ENCODE measurements at regions of chr9 and their contacts with region 1.

Region 1: GRCh38 chr9:34252670-34253459 is 74.0 kb downstream of the UBAP1 start:
- DNase-seq: peak; percentile 64
- H3K4me3 Mint-ChIP-seq: no peak overlapping the region
- H3K27ac Mint-ChIP-seq: peak overlapping the region; percentile 94
- H3K4me1 Mint-ChIP-seq: peaks cover 32% of the 10 kb centered on the region
- H3K27me3 Mint-ChIP-seq: no peaks in the 10 kb centered on the region
- CTCF ChIP-seq: peak; percentile 72

Region 2: DNA sequence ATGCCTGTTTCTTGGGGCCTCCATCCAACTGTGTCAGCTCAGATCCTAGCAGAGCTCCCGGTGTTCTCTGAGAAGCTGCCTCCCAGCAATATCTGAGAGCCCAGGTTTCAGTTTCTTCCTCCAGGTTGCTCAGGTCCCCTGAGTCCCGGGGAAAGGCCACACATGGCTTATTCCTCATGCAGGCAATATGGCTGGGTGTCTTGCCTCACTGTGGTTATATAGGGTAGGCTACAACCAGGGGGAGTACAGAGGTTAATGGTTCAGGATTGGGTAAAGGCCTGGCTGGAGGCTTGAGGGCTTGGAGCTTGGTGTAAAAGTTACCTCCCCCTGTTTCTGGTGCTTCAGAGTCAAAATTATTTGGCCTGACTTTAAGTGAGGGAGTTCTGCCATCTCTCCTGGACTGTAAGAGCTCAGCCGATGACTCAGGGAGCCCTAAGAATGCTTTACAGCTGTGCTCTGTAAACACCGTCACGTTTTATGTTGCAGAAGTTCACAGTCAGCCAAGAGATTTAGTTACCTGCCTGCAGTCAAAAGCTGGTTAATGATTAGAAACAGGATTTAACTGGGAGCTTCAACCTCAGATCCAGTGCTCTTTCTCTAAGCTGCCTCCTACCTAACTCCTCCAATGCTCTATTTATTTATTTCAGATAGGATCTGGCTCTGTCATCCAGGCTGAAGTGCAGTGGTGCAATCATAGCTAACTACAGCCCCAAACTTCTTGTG is 179.8 kb before region 1 on chr9:
- CTCF ChIA-PET with region 1: interaction called, 39 read pairs
- POLR2A ChIA-PET with region 1: interaction called, 3 read pairs
- intact Hi-C with region 1: loop called (anchors 1 kb)
- DNase-seq: peak; percentile 80
- H3K4me3 Mint-ChIP-seq: no peak overlapping the region
- H3K27ac Mint-ChIP-seq: peak overlapping the region; percentile 81
- H3K4me1 Mint-ChIP-seq: peaks cover 22% of the 10 kb centered on the region
- H3K27me3 Mint-ChIP-seq: no peaks in the 10 kb centered on the region
- CTCF ChIP-seq: no peak

Region 3: DNA sequence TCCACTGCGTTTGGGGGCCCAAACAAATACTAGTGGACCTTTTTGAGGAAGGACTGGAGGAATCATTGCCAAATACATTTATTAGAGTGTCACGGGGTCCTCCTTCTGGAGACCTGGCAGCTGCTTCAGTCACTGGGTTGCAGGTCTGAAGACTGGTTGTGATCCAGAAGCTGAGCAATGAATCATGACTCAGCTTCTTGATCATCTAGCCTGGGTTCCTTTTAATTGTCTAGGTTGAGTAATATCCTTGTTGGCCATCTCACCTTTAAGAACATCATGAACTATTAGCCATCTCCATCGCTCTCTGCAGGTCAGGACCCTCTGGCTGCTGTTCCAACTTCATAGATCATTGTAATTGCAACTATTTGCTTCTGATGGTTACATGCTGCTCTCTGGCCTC is 89.4 kb before region 1 on chr9:
- CTCF ChIA-PET with region 1: interaction called, 6 read pairs
- POLR2A ChIA-PET with region 1: interaction called, 17 read pairs
- intact Hi-C with region 1: no loop called
- DNase-seq: peak; percentile 93
- H3K4me3 Mint-ChIP-seq: peak overlapping the region; percentile 41
- H3K27ac Mint-ChIP-seq: peak overlapping the region; percentile 36
- H3K4me1 Mint-ChIP-seq: peaks cover 23% of the 10 kb centered on the region
- H3K27me3 Mint-ChIP-seq: no peaks in the 10 kb centered on the region
- CTCF ChIP-seq: no peak

Region 4: DNA sequence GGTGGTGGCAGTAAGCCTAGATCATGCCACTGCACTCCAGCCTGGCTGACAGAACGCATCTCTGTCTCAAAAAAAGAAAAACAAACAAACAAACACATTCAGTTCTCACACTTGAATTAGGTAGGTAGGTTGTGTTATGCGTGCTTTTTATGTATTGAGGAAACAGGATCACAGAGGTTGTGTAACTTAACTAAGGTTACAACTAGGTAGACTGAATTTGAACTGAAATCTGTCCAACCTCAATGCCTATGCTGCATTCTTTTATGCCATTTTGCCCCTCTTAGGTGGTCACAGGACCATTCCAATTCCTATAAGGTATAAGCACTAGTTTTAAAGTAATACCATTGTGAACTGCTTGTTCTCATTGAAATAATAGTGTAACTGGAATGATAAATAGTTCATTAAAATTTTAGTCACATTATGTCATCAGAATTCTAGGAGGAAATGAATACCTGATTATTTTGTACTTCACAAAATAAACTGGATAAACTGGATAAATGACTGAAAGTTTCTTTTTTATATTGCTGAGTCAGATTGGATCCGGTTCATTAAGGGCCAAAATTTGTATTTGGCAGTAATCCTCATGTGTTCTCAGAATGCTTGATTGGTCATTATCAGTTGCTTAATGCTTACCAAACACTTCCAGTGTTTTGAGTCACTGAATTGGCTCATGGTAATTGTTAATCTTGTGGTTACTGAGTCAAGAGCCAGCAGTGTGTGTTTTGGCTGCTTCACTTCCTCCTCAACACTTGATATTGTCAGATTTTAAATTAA is 66.9 kb before region 1 on chr9:
- CTCF ChIA-PET with region 1: interaction called, 26 read pairs
- POLR2A ChIA-PET with region 1: interaction called, 86 read pairs
- intact Hi-C with region 1: loop called (anchors 1 kb)
- DNase-seq: peak; percentile 96
- H3K4me3 Mint-ChIP-seq: peak overlapping the region; percentile 8
- H3K27ac Mint-ChIP-seq: peak overlapping the region; percentile 67
- H3K4me1 Mint-ChIP-seq: peaks cover 23% of the 10 kb centered on the region
- H3K27me3 Mint-ChIP-seq: no peaks in the 10 kb centered on the region
- CTCF ChIP-seq: no peak

Region 5: GRCh38 chr9:34233672-34234071 is 19.2 kb before region 1 on chr9:
- CTCF ChIA-PET with region 1: interaction called, 39 read pairs
- POLR2A ChIA-PET with region 1: interaction called, 4 read pairs
- intact Hi-C with region 1: no loop called
- DNase-seq: no peak
- H3K4me3 Mint-ChIP-seq: no peak overlapping the region
- H3K27ac Mint-ChIP-seq: peak overlapping the region; percentile 25
- H3K4me1 Mint-ChIP-seq: peaks cover 12% of the 10 kb centered on the region
- H3K27me3 Mint-ChIP-seq: no peaks in the 10 kb centered on the region
- CTCF ChIP-seq: no peak

Region 6: DNA sequence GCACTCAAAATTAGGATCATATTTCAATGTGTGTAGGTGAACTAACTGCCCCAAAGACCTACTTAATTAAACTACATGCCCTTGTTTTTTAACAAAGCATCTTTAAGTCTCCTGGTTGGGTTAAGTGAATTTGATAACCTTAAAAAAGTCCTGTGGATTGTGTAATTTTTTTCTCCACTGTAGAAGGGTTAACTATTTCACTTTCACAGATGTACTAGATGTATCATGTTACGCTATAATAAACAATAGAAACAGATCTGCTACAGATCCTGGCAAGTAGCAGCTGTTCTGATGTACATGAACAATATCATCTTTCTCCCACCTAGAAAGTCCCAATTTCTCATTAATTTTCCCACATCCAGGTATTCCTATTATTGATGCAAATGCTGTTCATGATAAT is 57.3 kb after region 1 on chr9:
- CTCF ChIA-PET with region 1: no interaction called
- POLR2A ChIA-PET with region 1: no interaction called
- intact Hi-C with region 1: no loop called
- DNase-seq: peak; percentile 21
- H3K4me3 Mint-ChIP-seq: no peak overlapping the region
- H3K27ac Mint-ChIP-seq: no peak overlapping the region
- H3K4me1 Mint-ChIP-seq: peaks cover 8% of the 10 kb centered on the region
- H3K27me3 Mint-ChIP-seq: no peaks in the 10 kb centered on the region
- CTCF ChIP-seq: no peak

Region 7: GRCh38 chr9:34328987-34329832 is 76.3 kb after region 1 on chr9 and contains the starts of genes KIF24 and NUDT2:
- CTCF ChIA-PET with region 1: interaction called, 12 read pairs
- POLR2A ChIA-PET with region 1: interaction called, 9 read pairs
- intact Hi-C with region 1: loop called (anchors 5 kb)
- DNase-seq: peak; percentile 100
- H3K4me3 Mint-ChIP-seq: peak within 1 kb of the TSS; percentile 92
- H3K27ac Mint-ChIP-seq: peak within 1 kb of the TSS; percentile 99
- H3K4me1 Mint-ChIP-seq: peaks cover 42% of the 10 kb centered on the region
- H3K27me3 Mint-ChIP-seq: no peaks in the 10 kb centered on the region
- CTCF ChIP-seq: no peak
- total RNA-seq, gene KIF24: 3.3 and 3.5 TPM in 2 replicates
- total RNA-seq, gene NUDT2: 30.6 and 35.0 TPM in 2 replicates

Region 8: GRCh38 chr9:34573599-34574325 is 320.9 kb after region 1 on chr9:
- CTCF ChIA-PET with region 1: no interaction called
- POLR2A ChIA-PET with region 1: no interaction called
- intact Hi-C with region 1: no loop called
- DNase-seq: no peak
- H3K4me3 Mint-ChIP-seq: no peak overlapping the region
- H3K27ac Mint-ChIP-seq: no peak overlapping the region
- H3K4me1 Mint-ChIP-seq: no peaks in the 10 kb centered on the region
- H3K27me3 Mint-ChIP-seq: peaks cover 25% of the 10 kb centered on the region
- CTCF ChIP-seq: no peak

Region 9: GRCh38 chr9:34603610-34604231 is 350.9 kb after region 1 on chr9:
- CTCF ChIA-PET with region 1: no interaction called
- POLR2A ChIA-PET with region 1: no interaction called
- intact Hi-C with region 1: loop called (anchors 10 kb)
- DNase-seq: peak; percentile 82
- H3K4me3 Mint-ChIP-seq: no peak overlapping the region
- H3K27ac Mint-ChIP-seq: no peak overlapping the region
- H3K4me1 Mint-ChIP-seq: peaks cover 9% of the 10 kb centered on the region
- H3K27me3 Mint-ChIP-seq: no peaks in the 10 kb centered on the region
- CTCF ChIP-seq: peak; percentile 77